Cardiac septum (tissue), 1 donor: ENCODE measurements at regions of chr6 and their contacts with region 1.

Region 1: DNA sequence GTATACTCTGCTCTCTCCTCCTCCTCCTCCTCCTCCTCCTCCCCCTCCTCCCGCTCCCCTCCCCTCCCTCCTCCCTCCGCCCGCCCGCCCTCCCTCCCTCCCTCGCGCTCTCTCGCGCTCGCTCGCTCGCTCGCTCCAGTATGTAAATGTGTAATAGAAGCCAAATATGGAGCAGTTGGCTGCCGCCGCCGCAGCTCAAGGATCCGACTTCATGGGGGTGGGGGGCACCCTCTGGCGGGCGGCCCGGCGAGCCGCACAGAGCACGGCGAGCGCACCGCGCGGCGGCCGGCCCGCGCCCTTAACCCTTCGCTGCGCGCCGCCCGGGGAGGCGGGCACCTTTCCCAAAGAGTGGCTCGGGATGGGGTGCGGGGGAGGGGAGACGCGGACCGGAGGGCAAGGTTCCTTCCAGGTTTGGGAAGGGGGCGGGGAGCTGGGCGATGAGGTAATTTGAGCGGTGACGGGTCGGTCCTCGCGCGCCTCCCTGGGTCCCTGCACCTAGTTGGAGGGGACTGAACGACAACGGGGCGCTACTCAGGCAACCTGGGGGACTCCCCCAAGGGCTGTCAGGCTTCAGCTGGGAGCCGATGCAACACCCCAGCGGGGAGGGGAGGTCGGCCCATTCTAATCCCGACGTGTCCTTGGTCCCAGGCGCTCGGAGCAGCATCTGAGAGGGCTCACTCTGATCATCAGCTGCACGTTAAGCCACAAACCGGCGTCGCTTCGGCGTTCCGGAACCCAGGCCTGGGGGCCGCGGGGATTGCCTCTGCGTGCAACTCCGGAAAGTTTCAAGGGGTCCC is 409 bp upstream of the ATXN1 start:
- DNase-seq: peak; percentile 94

Region 2: GRCh38 chr6:16332175-16332542 is 429.5 kb before region 1 on chr6:
- intact Hi-C with region 1: loop called (anchors 2 kb)
- DNase-seq: peak; percentile 89

Region 3: GRCh38 chr6:16514249-16514648 is 247.4 kb before region 1 on chr6:
- intact Hi-C with region 1: loop called (anchors 5 kb)
- DNase-seq: no peak

Region 4: GRCh38 chr6:16819752-16820151 is 58.1 kb after region 1 on chr6:
- intact Hi-C with region 1: no loop called
- DNase-seq: no peak

Region 5: DNA sequence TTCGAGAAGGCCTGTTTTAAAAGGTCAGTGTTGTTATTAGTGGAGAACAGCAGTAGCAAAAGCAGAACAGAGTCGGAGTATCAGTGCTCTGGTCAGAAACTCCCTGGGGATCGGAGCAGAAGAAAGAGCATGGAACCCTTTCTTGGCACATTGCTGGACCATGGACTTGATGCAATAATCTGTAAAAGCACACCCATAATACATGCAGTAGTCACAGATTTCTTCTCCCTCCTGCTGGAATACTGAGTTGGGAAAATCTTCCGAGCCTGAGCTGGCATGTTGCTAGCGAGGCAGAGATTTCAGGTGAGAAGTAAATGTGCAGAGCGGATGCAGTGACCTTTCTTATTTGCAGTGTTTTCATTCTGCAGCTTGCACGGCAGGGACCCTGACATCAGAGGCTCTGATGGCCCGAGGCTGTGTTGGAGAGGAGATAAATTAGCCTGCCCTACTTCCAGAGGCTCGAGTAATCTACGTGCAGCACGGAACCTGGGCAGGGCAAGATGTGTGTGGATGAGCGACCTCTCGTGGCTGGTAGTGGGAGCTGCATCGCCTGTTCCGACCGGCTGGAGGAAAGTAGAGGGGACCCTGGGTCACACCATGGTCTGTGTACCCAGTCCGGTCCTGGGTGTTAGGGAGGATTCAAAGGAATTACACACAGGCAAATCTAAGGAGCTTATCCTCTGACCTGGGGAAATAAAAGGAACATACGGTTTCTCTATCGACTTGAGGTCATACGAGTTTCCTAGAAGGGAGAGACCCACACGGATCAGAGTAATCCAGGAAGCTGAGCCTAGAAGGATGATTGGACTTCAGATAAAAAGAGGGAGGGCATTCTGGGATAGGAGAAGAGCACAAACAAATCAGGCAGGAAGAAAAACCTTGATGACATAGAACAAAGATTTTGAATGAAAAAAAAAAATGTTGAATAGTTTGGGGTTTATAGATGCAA is 203.2 kb after region 1 on chr6:
- intact Hi-C with region 1: loop called (anchors 1 kb)
- DNase-seq: peak; percentile 78